ENCODE measurements at regions of chr4 and their contacts with region 1.

Region 1: GRCh38 chr4:82373816-82374625 is at the start of gene HNRNPD:
- DNase-seq: peak; percentile 79 to 96 (median 93)
- ATAC-seq: peak; percentile 93
- H3K4me3 ChIP-seq: peak within 1 kb of the TSS; percentile 94
- H3K4me3 Mint-ChIP-seq: peak within 1 kb of the TSS; percentile 91 to 100 (median 97)
- H3K27ac ChIP-seq: peak within 1 kb of the TSS; percentile 98
- H3K27ac Mint-ChIP-seq: peak within 1 kb of the TSS; percentile 95 to 100 (median 99)
- H3K4me1 ChIP-seq: peaks cover 28 to 31% of the 10 kb centered on the region in 2 donors
- H3K4me1 Mint-ChIP-seq: peaks cover 35 to 62% (median 54%) of the 10 kb centered on the region in 7 donors
- H3K27me3 ChIP-seq: no peaks in the 10 kb centered on the region
- H3K27me3 Mint-ChIP-seq: peaks cover 0 to 3% (median 0%) of the 10 kb centered on the region in 5 donors
- total RNA-seq, gene HNRNPD: 200 to 355 (median 238) TPM

Region 2: GRCh38 chr4:82284858-82285805 is 88.9 kb before region 1 on chr4:
- CTCF ChIA-PET with region 1: interaction called, 6 read pairs
- POLR2A ChIA-PET with region 1: interaction called, 6 read pairs
- intact Hi-C with region 1: loop called (anchors 1 kb)
- DNase-seq: peak; percentile 97 to 100 (median 99)
- ATAC-seq: peak; percentile 94
- H3K4me3 ChIP-seq: peak overlapping the region; percentile 55
- H3K4me3 Mint-ChIP-seq: peak overlapping the region; percentile 70 to 91 (median 86)
- H3K27ac ChIP-seq: peak overlapping the region; percentile 71
- H3K27ac Mint-ChIP-seq: peak overlapping the region; percentile 53 to 94 (median 83)
- H3K4me1 ChIP-seq: peaks cover 4 to 11% of the 10 kb centered on the region in 2 donors
- H3K4me1 Mint-ChIP-seq: peaks cover 9 to 22% (median 13%) of the 10 kb centered on the region in 7 donors
- H3K27me3 ChIP-seq: no peaks in the 10 kb centered on the region
- H3K27me3 Mint-ChIP-seq: peaks cover 0 to 28% (median 0%) of the 10 kb centered on the region in 5 donors

Region 3: DNA sequence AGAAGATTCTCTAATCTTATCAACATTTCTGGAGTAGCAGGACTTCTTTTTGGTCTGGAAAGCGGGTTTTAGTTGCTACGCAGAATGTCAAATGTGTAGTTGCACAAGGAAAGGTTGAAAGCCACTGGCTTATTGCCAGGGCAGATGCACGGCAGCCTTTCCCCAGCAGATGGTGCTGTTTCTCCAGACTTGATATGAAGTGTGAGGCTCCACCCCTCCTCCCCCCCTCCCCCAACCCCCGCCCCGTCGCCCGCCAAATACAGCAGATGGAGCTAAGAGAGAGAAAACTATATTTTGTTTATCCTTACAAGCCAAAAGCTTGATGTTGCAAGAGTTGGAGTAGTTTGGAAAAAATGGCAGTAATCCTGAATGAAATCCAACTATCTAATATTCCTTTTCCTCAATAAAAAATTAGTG is 88.4 kb after region 1 on chr4:
- CTCF ChIA-PET with region 1: interaction called, 3 read pairs
- POLR2A ChIA-PET with region 1: no interaction called
- intact Hi-C with region 1: loop called in 1 of 2 experiments (anchors 1 kb)
- DNase-seq: peak; percentile 60 to 83 (median 79)
- ATAC-seq: peak; percentile 96
- H3K4me3 ChIP-seq: no peak overlapping the region
- H3K4me3 Mint-ChIP-seq: no peak overlapping the region
- H3K27ac ChIP-seq: no peak overlapping the region
- H3K27ac Mint-ChIP-seq: peak overlapping the region in 1 of 9 donors; percentile 34
- H3K4me1 ChIP-seq: no peaks in the 10 kb centered on the region
- H3K4me1 Mint-ChIP-seq: peaks cover 0 to 5% (median 0%) of the 10 kb centered on the region in 7 donors
- H3K27me3 ChIP-seq: no peaks in the 10 kb centered on the region
- H3K27me3 Mint-ChIP-seq: no peaks in the 10 kb centered on the region

Region 4: DNA sequence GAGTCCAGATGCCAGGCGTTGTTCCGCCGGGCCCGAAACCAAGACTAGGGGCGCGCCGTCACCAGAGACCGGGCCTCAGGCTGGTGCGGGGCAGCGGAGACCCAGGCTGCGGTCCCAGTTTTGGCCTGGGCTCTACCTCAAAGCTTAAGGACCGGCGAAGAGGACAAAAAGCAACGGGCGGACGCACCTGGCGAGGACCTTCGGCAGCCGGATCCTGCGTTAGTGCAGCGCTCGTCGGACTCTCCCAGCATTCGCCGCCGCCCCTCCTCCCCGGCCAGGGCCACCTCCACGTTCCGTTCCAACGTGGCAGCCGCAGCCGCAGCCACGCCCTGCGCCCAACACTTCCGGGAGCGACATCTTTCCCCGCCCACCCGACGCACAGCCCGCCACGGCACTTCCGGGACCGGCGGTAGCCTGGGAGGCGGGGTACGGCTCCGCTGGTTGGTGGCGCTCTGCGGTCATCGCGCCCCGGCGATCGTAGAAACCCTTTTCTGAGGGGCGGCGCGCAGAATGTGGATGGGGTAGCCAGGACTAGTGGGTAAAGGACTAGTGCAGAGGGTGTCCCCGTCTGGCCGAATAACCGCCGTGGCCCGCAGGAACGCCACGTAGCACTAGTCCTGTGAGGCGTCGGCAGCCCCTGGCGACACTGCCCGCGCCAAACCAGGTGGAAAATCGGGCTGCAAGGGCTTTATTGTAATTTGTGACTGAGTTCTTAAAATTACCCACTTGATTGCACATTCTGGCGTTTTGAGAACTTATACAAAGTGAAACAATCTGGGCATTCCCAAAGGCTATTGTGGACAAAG is 517.1 kb after region 1 on chr4 and contains the start of gene SEC31A:
- CTCF ChIA-PET with region 1: no interaction called
- POLR2A ChIA-PET with region 1: interaction called, 3 read pairs
- intact Hi-C with region 1: loop called (anchors 1 kb)
- DNase-seq: peak; percentile 89 to 98 (median 95)
- ATAC-seq: peak; percentile 97
- H3K4me3 ChIP-seq: peak within 1 kb of the TSS; percentile 96
- H3K4me3 Mint-ChIP-seq: peak within 1 kb of the TSS; percentile 86 to 96 (median 93)
- H3K27ac ChIP-seq: peak within 1 kb of the TSS; percentile 99
- H3K27ac Mint-ChIP-seq: peak within 1 kb of the TSS; percentile 92 to 99 (median 97)
- H3K4me1 ChIP-seq: peaks cover 11 to 12% of the 10 kb centered on the region in 2 donors
- H3K4me1 Mint-ChIP-seq: peaks cover 18 to 51% (median 41%) of the 10 kb centered on the region in 7 donors
- H3K27me3 ChIP-seq: no peaks in the 10 kb centered on the region
- H3K27me3 Mint-ChIP-seq: no peaks in the 10 kb centered on the region
- total RNA-seq, gene SEC31A: 137 to 168 (median 149) TPM

Region 5: GRCh38 chr4:83034630-83035494 is 660.8 kb after region 1 on chr4 and contains the start of gene COPS4:
- CTCF ChIA-PET with region 1: no interaction called
- POLR2A ChIA-PET with region 1: interaction called, 7 read pairs
- intact Hi-C with region 1: loop called in 1 of 2 experiments (anchors 1 kb)
- DNase-seq: peak; percentile 77 to 98 (median 97)
- ATAC-seq: peak; percentile 99
- H3K4me3 ChIP-seq: peak within 1 kb of the TSS; percentile 98
- H3K4me3 Mint-ChIP-seq: peak within 1 kb of the TSS; percentile 92 to 100 (median 98)
- H3K27ac ChIP-seq: peak within 1 kb of the TSS; percentile 94
- H3K27ac Mint-ChIP-seq: peak within 1 kb of the TSS; percentile 94 to 100 (median 97)
- H3K4me1 ChIP-seq: peaks cover 4 to 19% of the 10 kb centered on the region in 2 donors
- H3K4me1 Mint-ChIP-seq: peaks cover 19 to 44% (median 35%) of the 10 kb centered on the region in 7 donors
- H3K27me3 ChIP-seq: no peaks in the 10 kb centered on the region
- H3K27me3 Mint-ChIP-seq: no peaks in the 10 kb centered on the region
- total RNA-seq, gene COPS4: 23.5 to 32.8 (median 24.7) TPM

Region 6: GRCh38 chr4:83340692-83341343 is 966.8 kb after region 1 on chr4:
- CTCF ChIA-PET with region 1: no interaction called
- POLR2A ChIA-PET with region 1: no interaction called
- intact Hi-C with region 1: loop called in 1 of 2 experiments (anchors 10 kb)
- DNase-seq: peak in 8 of 9 donors; percentile 12 to 69 (median 20)
- ATAC-seq: peak; percentile 75
- H3K4me3 ChIP-seq: peak overlapping the region; percentile 10
- H3K4me3 Mint-ChIP-seq: peak overlapping the region in 8 of 10 donors; percentile 21 to 61 (median 46)
- H3K27ac ChIP-seq: no peak overlapping the region
- H3K27ac Mint-ChIP-seq: peak overlapping the region in 5 of 9 donors; percentile 28 to 81 (median 47)
- H3K4me1 ChIP-seq: peaks cover 12 to 15% of the 10 kb centered on the region in 2 donors
- H3K4me1 Mint-ChIP-seq: peaks cover 11 to 28% (median 23%) of the 10 kb centered on the region in 7 donors
- H3K27me3 ChIP-seq: no peaks in the 10 kb centered on the region
- H3K27me3 Mint-ChIP-seq: peaks cover 0 to 36% (median 4%) of the 10 kb centered on the region in 5 donors

Measured in naive thymus-derived CD4-positive, alpha-beta T cell (primary cell).